BJ (cell line): ENCODE measurements at regions of chr12 and their contacts with region 1.

Region 1: DNA sequence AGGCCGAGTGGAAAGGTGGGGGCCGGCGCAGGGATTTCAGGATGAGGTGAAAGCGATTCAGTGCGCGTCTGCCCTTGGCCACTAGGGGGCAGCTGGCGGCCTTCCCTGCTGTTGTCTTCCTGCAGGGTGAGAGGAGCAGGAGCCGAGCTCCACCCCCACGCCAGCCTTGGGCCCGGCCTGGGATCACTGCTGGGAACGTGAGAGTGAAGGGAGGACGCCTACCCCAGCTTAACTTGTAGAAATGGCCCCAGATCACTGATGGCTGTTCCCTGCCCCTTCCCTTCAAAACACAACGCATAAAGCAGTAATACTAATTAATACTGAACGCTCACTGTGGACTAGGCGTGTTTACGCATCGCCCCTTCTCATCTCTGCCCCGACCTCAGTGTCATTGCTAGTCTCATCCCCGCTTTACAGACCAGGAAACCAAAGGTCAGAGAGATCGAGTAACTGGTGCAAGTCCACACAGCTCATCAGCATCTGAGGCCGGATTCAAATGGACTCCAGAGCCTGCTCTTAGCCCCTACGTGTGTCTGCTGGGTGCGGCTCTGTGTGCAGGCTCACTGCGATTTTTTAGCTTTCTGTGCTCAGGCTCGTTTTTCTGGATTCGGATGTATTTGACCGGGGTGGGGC is 24.3 kb downstream of the MVK start:
- DNase-seq: no peak
- H3K4me3 ChIP-seq: no peak overlapping the region
- H3K27me3 ChIP-seq: peaks cover 2% of the 10 kb centered on the region; the same call in 1 of the 2 replicates
- CTCF ChIP-seq: peak; percentile 98

Region 2: DNA sequence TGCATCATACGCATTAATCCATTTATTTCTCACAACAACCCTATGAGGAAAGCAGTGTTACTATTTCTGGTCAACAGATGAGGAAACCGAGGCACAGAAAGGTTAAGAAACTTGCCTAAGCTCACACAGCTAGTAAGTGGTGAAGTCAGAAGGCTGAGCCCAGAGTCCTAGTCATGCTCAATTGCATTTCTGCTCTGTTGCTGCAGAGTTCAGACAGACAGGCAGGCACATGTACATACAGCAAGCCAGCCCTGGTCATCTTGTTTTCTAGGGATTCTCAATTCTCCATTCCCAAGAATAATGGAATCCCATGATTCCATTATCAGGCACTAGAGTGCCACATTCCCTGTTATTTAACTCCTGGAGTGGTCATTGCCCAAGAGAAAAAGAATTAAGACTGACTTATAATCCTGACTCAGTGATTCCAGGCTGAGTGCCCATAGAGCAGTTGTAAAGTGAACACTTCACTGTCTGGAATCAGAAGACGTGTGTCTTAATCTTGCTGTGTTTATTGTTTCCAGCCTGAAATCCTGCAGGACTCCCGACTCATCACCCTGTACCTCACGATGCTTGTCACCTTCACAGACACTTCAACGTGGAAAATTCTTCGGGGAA is 109.8 kb before region 1 on chr12:
- CTCF ChIA-PET with region 1: no interaction called
- POLR2A ChIA-PET with region 1: no interaction called
- DNase-seq: no peak
- H3K4me3 ChIP-seq: no peak overlapping the region
- H3K27me3 ChIP-seq: no peaks in the 10 kb centered on the region
- CTCF ChIP-seq: no peak

Region 3: GRCh38 chr12:109582658-109583057 is 15.3 kb before region 1 on chr12:
- CTCF ChIA-PET with region 1: interaction called, 19 read pairs
- POLR2A ChIA-PET with region 1: no interaction called
- DNase-seq: no peak
- H3K4me3 ChIP-seq: no peak overlapping the region
- H3K27me3 ChIP-seq: no peaks in the 10 kb centered on the region
- CTCF ChIP-seq: no peak

Region 4: DNA sequence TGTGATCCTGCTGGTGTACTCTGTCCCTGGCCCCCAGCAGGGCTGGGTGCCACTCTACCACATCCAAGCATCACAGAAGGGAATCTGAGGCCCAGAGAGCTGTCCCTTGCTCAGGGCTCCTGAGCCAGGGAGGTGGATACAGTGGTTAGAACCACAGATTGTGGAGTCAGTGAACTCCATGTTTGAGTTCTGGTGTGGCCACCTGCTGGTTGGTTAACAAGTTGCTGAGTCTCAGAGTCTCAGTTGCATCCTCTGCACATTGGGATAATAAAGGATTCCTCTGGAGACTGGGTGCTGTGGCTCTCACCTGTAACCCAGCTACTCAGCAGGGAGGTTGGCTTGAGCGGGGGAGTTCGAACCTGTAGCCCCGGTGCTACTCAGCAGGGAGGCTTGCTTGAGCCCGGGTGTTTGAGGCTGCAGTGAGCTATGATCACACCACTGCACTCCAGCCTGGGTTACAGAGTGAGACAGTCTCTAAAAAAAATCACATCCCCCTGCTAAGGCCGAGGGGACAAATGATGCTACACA is 15.1 kb after region 1 on chr12:
- CTCF ChIA-PET with region 1: interaction called, 22 read pairs
- POLR2A ChIA-PET with region 1: no interaction called
- DNase-seq: no peak
- H3K4me3 ChIP-seq: no peak overlapping the region
- H3K27me3 ChIP-seq: peaks cover 12% of the 10 kb centered on the region
- CTCF ChIP-seq: peak; percentile 38; the same call in 1 of the 2 replicates

Region 5: GRCh38 chr12:109650808-109651207 is 52.9 kb after region 1 on chr12:
- CTCF ChIA-PET with region 1: no interaction called
- POLR2A ChIA-PET with region 1: no interaction called
- DNase-seq: no peak
- H3K4me3 ChIP-seq: no peak overlapping the region
- H3K27me3 ChIP-seq: peaks cover 2% of the 10 kb centered on the region
- CTCF ChIP-seq: no peak

Region 6: GRCh38 chr12:109695961-109696461 is 98.1 kb after region 1 on chr12:
- CTCF ChIA-PET with region 1: interaction called, 11 read pairs
- POLR2A ChIA-PET with region 1: no interaction called
- DNase-seq: no peak
- H3K4me3 ChIP-seq: no peak overlapping the region
- H3K27me3 ChIP-seq: peaks cover 2% of the 10 kb centered on the region; the same call in 1 of the 2 replicates
- CTCF ChIP-seq: no peak

Region 7: GRCh38 chr12:109775172-109775881 is 177.4 kb after region 1 on chr12:
- CTCF ChIA-PET with region 1: interaction called, 200 read pairs
- POLR2A ChIA-PET with region 1: interaction called, 4 read pairs
- DNase-seq: no peak
- H3K4me3 ChIP-seq: no peak overlapping the region
- H3K27me3 ChIP-seq: peaks cover 4% of the 10 kb centered on the region
- CTCF ChIP-seq: peak; percentile 93

Region 8: GRCh38 chr12:110039085-110039807 is 441.3 kb after region 1 on chr12:
- CTCF ChIA-PET with region 1: no interaction called
- POLR2A ChIA-PET with region 1: no interaction called
- DNase-seq: peak; percentile 89
- H3K4me3 ChIP-seq: no peak overlapping the region
- H3K27me3 ChIP-seq: no peaks in the 10 kb centered on the region
- CTCF ChIP-seq: no peak

Region 9: DNA sequence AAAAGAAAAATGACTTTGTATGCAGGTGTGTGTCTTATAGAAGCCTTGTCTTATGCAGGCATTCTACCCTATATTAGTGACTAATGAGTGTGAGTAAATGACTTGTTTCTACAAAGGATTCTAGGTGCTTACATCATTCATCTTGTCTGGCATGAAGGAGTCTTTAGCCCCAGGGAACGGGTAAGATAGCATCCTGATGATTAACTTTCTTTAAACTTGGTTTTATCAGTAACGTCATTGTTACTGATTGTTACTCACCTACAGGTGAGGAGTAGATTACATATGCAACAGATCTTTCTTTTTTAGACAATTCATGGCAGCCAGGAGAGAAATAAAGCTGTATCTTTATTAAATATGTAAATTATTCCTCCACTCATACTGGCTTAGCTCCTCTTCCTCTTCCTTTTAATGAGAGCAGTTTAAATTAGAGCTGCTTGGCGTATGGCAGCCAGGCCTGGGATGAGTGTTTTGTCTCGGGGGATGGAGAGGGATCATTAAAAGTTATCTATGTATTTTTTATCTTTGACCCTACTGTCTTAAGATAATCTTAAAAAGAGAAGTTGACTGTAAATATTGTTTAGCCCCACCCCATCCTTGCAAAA is 626.0 kb after region 1 on chr12:
- CTCF ChIA-PET with region 1: no interaction called
- POLR2A ChIA-PET with region 1: no interaction called
- DNase-seq: no peak
- H3K4me3 ChIP-seq: no peak overlapping the region
- H3K27me3 ChIP-seq: no peaks in the 10 kb centered on the region
- CTCF ChIP-seq: no peak